Motor neuron (in vitro differentiated cells): ENCODE measurements at regions of chr11 and their contacts with region 1.

Region 1: DNA sequence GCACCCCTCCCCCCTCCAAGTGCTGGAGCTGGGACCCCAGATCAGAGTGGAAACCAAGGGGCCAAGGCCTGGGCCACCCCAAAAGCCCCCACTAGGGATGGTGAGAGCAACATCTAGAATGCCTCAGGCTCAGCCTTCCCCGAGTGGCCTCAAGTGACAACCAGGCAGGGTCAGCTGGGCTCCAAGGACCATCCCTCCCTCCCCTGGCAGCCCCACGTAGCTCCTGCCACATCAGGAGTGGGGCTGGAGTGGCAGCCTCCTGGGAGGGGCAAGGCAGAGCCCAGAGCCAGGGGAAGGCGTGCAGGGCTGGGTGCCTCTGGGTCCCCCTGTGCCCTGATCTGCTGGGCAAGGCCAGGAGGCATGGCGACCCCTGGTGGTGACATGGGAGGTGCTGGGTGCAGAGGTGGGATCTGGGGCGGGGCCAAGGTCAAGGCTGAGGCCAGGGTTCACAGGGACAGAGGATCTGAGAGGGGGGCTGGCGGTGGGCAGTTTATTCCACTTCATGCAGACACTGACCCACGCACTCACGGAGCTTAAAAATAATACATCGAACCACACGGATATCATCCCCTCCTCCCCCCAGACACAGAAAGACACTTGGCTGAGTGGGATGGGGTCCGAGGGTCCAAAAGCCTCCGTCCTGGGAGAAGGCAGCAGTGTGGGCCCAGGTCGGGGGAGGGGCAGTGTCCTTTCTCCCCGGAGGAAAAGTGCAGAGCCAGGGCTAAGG is 15.8 kb upstream of the EHD1 start:
- ATAC-seq: peak; percentile 61 to 90 (median 82)
- H3K4me3 ChIP-seq: no peak overlapping the region
- H3K27ac ChIP-seq: no peak overlapping the region
- H3K4me1 ChIP-seq: peaks cover 4 to 12% of the 10 kb centered on the region in 2 donors

Region 2: GRCh38 chr11:64253481-64253880 is 640.8 kb before region 1 on chr11:
- in situ Hi-C with region 1: no loop called
- ATAC-seq: no peak
- H3K4me3 ChIP-seq: no peak overlapping the region
- H3K27ac ChIP-seq: no peak overlapping the region
- H3K4me1 ChIP-seq: peaks cover 8 to 20% of the 10 kb centered on the region in 2 donors

Region 3: DNA sequence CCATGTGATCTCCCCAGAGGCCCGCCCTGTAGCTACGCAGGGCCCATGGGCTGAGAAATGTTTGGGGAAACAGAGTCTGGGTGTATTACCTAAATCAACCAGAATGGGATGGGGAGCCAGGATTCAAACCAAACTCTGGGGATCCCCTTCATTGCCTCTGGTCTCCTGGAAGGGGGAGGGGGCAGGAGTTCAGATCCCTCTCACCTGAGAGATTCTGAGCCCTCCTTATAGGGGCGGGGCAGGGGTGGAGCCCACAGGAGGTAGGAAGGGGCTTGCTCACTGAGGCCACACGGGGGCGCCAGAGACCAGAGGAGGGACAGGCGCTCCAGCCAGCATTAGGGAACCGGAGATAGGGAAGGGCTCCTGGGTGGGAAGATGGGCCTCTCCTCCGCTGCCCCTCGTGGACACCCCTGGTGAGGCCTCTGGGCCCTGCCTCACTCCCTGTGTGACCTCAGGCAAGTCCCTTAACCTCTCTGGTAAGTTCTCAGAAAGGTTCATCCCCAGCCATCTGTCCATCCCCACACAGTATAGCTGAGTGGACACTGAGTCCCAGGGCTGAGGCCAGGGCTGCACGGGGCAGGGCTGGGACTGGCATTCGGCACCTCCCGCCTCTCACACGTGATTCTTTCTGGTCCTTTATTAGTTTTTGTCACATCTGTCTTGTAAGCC is 47.1 kb before region 1 on chr11:
- in situ Hi-C with region 1: loop called in 1 of 9 experiments (anchors 10 kb)
- ATAC-seq: peak; percentile 54 to 87 (median 76)
- H3K4me3 ChIP-seq: no peak overlapping the region
- H3K27ac ChIP-seq: no peak overlapping the region
- H3K4me1 ChIP-seq: peaks cover 0 to 9% of the 10 kb centered on the region in 2 donors